ENCODE measurements at regions of chr7 and their contacts with region 1.

Region 1: DNA sequence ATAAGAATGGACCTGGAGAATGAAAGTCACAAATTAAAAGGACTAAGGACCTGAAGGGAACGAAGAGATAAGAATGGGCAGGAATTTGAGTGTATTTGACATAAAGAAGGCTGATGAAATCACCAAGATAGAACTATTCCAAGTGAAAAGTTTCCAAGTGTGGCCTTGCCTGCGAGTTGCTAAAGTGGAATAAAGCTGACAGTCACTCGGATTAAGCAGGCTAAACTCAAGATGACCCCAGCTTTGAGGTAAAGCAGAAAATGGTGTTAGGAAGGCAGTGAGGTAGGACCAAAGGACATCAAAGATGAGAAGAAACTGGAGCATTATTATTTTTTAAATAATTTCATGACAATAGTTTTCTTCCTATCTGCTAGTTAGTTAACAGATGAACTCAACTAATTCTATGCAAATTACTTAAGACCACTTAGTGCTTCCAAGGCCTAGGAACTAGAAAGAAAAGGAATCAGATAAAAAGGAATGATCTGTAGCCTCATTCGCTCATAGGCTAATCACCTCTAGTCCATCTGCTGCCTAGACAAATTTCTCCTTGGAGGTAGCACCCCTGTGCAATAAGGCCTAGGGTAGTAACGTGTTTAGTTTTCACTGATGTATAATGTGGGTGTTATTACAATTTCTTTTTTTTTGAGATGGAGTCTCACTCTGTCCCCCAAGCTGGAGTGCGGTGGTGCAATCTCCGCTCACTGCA is 34.5 kb downstream of the EZH2 start:
- DNase-seq: no peak
- H3K4me3 ChIP-seq: no peak overlapping the region
- H3K27ac ChIP-seq: no peak overlapping the region
- H3K4me1 ChIP-seq: no peaks in the 10 kb centered on the region
- H3K27me3 ChIP-seq: no peaks in the 10 kb centered on the region
- CTCF ChIP-seq: no peak

Region 2: DNA sequence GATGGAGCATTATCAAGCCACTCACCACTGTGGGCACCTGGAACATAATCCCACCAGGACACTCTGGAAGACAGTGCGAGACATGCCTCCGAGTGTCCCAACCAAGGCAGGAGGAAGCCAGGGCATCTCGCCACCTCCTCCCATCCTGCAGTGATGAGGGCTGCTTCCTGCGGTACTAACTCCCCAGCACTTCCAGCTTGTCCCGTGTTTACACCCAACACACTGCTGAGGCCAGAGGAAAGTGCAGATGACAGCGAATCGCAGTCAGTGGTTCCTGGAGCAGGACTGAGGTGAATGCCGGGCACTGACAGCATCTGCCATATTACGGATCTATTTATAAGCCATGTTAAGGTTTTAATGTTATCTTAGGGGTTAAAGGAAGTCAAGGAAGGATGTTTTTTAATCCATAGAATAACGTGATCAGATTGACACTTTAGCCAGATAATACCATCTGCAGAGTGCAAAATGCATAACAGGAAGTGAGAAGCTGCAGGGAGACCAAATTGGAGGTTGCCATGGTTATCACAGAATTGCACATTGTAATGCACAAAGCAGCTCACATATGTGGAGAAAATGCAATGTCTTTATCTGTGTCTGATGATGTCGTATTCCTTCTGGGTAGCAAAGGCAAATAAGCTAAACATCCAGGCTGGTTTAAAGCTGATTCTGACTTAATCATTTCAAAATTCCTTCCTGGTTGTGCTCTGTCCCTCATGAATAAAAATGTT is 573.1 kb before region 1 on chr7:
- intact Hi-C with region 1: loop called (anchors 10 kb)
- DNase-seq: no peak
- H3K4me3 ChIP-seq: no peak overlapping the region
- H3K27ac ChIP-seq: no peak overlapping the region
- H3K4me1 ChIP-seq: no peaks in the 10 kb centered on the region
- H3K27me3 ChIP-seq: no peaks in the 10 kb centered on the region
- CTCF ChIP-seq: no peak

Measured in ascending aorta (tissue), 2 donors.